Activated CD8-positive, alpha-beta T cell treated with anti-CD3 and anti-CD28 coated beads for 36 hours (primary cell): ENCODE measurements at regions of chr3 and their contacts with region 1.

Region 1: DNA sequence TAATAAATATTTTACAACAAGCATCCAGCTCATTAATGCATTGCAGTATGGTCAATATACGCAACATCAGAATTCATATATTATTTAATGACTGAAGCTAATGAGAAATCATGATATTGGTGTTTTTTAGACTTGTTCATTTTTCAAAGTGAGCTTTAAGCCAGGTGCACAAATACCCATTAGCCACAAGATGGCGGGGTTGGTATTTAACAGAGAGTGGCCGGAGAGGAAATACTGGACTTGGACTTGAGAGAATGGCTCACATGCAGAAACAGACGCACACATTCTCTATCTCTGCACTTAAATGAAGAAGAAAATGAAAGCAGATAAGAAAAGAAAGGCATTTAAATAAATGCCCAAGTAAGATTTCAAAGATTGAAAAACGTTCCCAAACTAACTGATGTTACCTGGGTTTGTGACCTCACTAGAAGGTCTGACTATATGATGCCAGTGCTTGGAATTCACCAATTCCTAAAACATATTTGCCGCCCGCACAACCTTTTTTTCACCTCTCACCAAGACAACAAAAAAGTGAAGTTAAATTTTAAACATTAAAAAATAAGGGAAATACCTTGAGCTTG is 21.2 kb upstream of the CRBN start:
- DNase-seq: peak; percentile 46
- ATAC-seq: peak; percentile 56
- H3K4me3 Mint-ChIP-seq: no peak overlapping the region
- H3K27ac Mint-ChIP-seq: no peak overlapping the region
- H3K4me1 Mint-ChIP-seq: peaks cover 15% of the 10 kb centered on the region
- H3K27me3 Mint-ChIP-seq: peaks cover 2% of the 10 kb centered on the region
- CTCF ChIP-seq: peak; percentile 89

Region 2: DNA sequence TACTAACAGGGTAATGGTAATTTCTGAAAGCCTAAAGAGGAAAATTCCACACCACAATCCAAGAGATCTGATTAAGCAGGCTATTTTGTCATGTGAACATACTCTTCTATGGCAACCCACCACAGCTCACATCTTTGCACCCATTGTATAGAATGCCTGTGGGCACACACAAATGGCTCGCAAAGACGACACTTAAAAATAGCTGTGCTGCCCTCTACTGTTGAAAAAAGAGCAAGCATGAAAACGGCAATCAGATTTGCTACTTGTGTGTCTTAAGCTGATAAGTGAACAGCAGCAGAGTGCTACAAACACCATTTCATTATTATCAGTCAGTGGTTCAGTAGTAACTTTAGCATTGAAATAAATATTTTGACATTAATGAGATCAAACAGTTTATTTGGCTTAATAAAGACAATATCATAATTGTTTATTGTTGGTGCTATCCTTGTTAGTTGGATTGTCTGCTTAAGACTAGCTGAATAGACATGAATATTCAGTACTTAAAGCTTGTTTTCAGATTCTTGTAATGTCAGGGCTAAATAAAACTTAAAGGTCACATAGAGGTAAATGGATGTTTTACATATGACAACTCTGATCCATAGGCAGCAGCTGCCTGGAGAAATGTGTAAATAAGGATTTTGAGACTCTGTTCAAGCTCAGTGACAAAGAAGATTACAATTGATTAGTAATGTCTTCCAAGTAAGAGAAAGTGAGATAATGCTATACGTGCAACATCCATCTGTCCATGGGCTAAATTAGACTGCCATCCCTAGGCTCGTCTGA is 797.6 kb after region 1 on chr3:
- CTCF ChIA-PET with region 1: interaction called, 55 read pairs
- POLR2A ChIA-PET with region 1: no interaction called
- intact Hi-C with region 1: loop called (anchors 1 kb)
- DNase-seq: peak; percentile 47
- ATAC-seq: peak; percentile 60
- H3K4me3 Mint-ChIP-seq: no peak overlapping the region
- H3K27ac Mint-ChIP-seq: no peak overlapping the region
- H3K4me1 Mint-ChIP-seq: no peaks in the 10 kb centered on the region
- H3K27me3 Mint-ChIP-seq: no peaks in the 10 kb centered on the region
- CTCF ChIP-seq: peak; percentile 86

Region 3: GRCh38 chr3:4271834-4272233 is 1071.1 kb after region 1 on chr3:
- CTCF ChIA-PET with region 1: interaction called, 13 read pairs
- POLR2A ChIA-PET with region 1: no interaction called
- intact Hi-C with region 1: loop called (anchors 10 kb)
- DNase-seq: no peak
- ATAC-seq: no peak
- H3K4me3 Mint-ChIP-seq: no peak overlapping the region
- H3K27ac Mint-ChIP-seq: no peak overlapping the region
- H3K4me1 Mint-ChIP-seq: peaks cover 9% of the 10 kb centered on the region
- H3K27me3 Mint-ChIP-seq: no peaks in the 10 kb centered on the region
- CTCF ChIP-seq: peak; percentile 70

Region 4: GRCh38 chr3:4290272-4290893 is 1089.7 kb after region 1 on chr3:
- CTCF ChIA-PET with region 1: interaction called, 26 read pairs
- POLR2A ChIA-PET with region 1: interaction called, 3 read pairs
- intact Hi-C with region 1: loop called (anchors 5 kb)
- DNase-seq: peak; percentile 63
- ATAC-seq: peak; percentile 88
- H3K4me3 Mint-ChIP-seq: no peak overlapping the region
- H3K27ac Mint-ChIP-seq: no peak overlapping the region
- H3K4me1 Mint-ChIP-seq: peaks cover 13% of the 10 kb centered on the region
- H3K27me3 Mint-ChIP-seq: no peaks in the 10 kb centered on the region
- CTCF ChIP-seq: peak; percentile 94